ENCODE measurements at regions of chr19 and their contacts with region 1.

Region 1: GRCh38 chr19:39074205-39074692 is 9.9 kb upstream of the ACP7 start:
- DNase-seq: no peak
- H3K4me3 Mint-ChIP-seq: peak overlapping the region; percentile 7
- H3K27ac Mint-ChIP-seq: peak overlapping the region; percentile 85
- H3K4me1 Mint-ChIP-seq: peaks cover 52% of the 10 kb centered on the region
- H3K27me3 Mint-ChIP-seq: no peaks in the 10 kb centered on the region
- CTCF ChIP-seq: no peak

Region 2: DNA sequence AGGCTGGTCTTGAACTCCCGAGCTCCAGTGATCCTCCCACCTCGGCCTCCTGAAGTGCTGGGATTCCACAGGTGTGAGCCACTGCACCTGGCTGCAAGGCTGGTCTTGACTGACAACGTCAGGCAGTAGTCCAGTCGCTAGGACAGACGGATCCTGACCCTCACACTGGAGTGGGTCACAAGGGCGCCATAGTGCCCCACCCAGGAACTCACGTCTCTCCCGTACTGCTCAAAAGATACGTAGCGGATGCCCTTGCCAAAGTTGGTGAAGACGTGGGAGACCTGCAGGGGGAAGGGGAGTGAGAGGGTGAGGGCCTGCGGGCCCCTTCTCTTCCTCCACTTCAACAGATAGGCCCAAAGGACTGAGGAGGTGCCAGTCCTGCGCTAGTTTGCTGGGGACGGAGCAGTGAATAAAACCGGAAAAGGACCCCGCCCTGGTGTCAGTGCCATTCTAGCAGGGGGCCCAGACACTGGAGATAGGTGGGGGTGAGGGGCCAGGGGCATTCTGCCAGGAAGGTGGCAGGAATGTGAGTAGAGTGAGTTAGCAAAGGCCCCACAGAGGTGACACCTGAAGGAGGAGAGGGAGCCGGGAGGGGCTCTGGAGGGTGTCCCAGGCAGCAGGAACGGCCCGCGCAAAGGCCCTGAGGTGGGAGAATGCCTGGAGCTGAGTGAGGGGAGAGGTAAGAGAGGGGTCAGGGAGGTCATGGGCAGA is 131.6 kb before region 1 on chr19:
- CTCF ChIA-PET with region 1: no interaction called
- intact Hi-C with region 1: no loop called
- DNase-seq: no peak
- H3K4me3 Mint-ChIP-seq: no peak overlapping the region
- H3K27ac Mint-ChIP-seq: no peak overlapping the region
- H3K4me1 Mint-ChIP-seq: no peaks in the 10 kb centered on the region
- H3K27me3 Mint-ChIP-seq: no peaks in the 10 kb centered on the region
- CTCF ChIP-seq: no peak

Region 3: DNA sequence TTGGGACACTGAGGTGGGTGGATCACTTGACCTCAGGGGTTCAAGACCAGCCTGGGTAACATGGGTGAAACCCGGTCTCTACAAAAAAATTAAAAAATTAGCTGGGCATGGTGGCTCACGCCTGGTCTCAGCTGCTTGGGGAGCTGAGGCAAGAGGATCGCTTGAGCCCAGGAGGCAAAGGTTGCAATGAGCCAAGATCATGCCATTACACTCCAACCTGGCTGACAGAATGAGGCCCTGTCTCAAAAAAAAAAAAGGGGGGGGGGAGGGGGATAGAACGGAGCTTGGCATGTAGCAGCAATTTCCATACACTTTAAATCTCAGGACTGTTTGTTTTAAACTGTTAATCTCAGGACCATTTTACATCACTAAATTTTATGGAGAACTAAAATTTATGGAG is 12.1 kb after region 1 on chr19:
- CTCF ChIA-PET with region 1: interaction called, 12 read pairs
- intact Hi-C with region 1: no loop called
- DNase-seq: no peak
- H3K4me3 Mint-ChIP-seq: no peak overlapping the region
- H3K27ac Mint-ChIP-seq: no peak overlapping the region
- H3K4me1 Mint-ChIP-seq: peaks cover 23% of the 10 kb centered on the region
- H3K27me3 Mint-ChIP-seq: no peaks in the 10 kb centered on the region
- CTCF ChIP-seq: no peak

Region 4: DNA sequence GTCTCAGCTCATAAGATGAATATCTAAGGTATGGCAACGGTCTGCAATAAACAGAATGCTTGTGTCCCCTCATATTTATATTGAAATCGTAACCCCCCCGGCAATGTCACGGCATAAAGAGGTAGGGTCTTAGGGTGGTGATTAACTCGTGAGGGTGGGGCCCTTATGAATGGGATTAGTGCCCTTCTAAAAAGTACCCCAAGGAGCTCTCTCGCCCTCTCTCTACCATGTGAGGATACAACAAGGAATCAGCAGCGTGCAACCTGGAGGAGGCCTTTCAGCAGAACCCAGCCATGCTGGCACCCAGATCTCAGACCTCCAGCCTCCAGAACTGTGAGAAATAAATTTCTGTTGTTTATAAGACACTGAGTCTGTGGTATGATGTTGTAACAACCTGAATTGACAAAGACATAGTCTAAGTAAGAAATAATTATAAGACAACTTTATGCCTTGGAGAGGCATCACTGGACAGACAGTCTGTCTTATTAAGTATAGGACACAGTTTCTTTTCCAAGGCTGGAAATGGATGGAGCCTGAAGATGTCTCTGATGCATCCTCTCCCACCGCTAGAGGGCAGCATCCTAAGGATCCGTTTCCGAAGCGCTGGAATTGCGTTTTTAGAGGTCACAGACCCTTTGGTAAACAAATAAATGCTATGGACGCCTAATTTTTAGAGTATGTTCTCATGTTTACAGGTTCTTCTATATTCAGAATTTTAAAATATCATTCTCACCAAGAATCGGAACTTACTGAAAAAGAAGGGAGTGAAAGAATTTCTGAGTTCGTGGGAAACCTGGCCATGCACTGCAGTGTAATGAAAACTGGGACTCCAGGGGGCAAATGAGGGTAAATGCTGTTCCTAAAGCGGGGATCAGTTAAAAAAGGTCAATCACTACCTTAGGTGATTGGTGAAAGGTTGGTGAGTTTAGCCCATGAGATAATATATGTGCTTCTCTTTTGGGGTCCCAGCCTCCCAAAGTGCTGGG is 691.1 kb after region 1 on chr19:
- CTCF ChIA-PET with region 1: no interaction called
- intact Hi-C with region 1: no loop called
- DNase-seq: peak; percentile 71
- H3K4me3 Mint-ChIP-seq: no peak overlapping the region
- H3K27ac Mint-ChIP-seq: no peak overlapping the region
- H3K4me1 Mint-ChIP-seq: no peaks in the 10 kb centered on the region
- H3K27me3 Mint-ChIP-seq: peaks cover 65% of the 10 kb centered on the region
- CTCF ChIP-seq: peak; percentile 70